Activated naive CD4-positive, alpha-beta T cell treated with anti-CD3 and anti-CD28 coated beads for 36 hours (primary cell): ENCODE measurements at regions of chr18 and their contacts with region 1.

Region 1: GRCh38 chr18:3281456-3282400 is 19.8 kb downstream of the MYL12B start:
- DNase-seq: no peak
- H3K4me3 Mint-ChIP-seq: no peak overlapping the region
- H3K27ac Mint-ChIP-seq: no peak overlapping the region
- H3K4me1 Mint-ChIP-seq: peaks cover 6% of the 10 kb centered on the region
- H3K27me3 Mint-ChIP-seq: no peaks in the 10 kb centered on the region

Region 2: GRCh38 chr18:3269241-3269913 is 12.4 kb before region 1 on chr18:
- CTCF ChIA-PET with region 1: interaction called, 4 read pairs
- intact Hi-C with region 1: loop called (anchors 1 kb)
- DNase-seq: no peak
- H3K4me3 Mint-ChIP-seq: no peak overlapping the region
- H3K27ac Mint-ChIP-seq: peak overlapping the region; percentile 28
- H3K4me1 Mint-ChIP-seq: peaks cover 74% of the 10 kb centered on the region
- H3K27me3 Mint-ChIP-seq: no peaks in the 10 kb centered on the region

Region 3: DNA sequence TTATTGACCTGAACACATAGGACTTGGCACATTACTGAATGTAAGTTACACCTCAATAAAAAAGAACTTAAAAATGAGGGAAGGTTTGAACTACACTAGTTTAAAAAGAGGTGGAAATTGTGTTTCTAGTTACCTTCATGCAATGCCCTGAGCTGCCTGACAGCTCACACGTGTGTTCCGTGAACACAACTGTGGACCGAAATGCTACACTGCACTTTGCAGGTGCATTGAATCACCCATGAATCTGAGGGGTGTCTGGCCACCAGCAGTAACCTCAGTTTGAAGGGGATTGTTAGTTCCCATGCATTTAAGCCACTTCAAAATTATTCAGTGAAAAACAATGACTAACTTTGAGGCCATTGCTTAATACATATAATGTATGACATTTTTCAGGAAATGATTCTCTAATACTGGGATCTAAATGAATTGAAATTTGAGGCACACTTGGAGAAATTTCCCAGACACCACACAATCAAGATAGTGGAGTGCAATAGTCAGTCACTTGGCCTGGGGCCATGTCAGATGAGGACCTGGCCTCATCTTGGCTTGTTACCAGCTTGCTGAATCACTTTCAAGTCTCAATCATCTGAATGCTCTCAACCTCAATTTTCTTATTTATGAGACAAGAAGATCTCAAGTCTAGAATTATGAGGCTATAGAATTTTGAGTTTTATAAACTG is 39.5 kb after region 1 on chr18:
- CTCF ChIA-PET with region 1: interaction called, 3 read pairs
- intact Hi-C with region 1: loop called (anchors 2 kb)
- DNase-seq: no peak
- H3K4me3 Mint-ChIP-seq: no peak overlapping the region
- H3K27ac Mint-ChIP-seq: no peak overlapping the region
- H3K4me1 Mint-ChIP-seq: peaks cover 7% of the 10 kb centered on the region
- H3K27me3 Mint-ChIP-seq: no peaks in the 10 kb centered on the region

Region 4: DNA sequence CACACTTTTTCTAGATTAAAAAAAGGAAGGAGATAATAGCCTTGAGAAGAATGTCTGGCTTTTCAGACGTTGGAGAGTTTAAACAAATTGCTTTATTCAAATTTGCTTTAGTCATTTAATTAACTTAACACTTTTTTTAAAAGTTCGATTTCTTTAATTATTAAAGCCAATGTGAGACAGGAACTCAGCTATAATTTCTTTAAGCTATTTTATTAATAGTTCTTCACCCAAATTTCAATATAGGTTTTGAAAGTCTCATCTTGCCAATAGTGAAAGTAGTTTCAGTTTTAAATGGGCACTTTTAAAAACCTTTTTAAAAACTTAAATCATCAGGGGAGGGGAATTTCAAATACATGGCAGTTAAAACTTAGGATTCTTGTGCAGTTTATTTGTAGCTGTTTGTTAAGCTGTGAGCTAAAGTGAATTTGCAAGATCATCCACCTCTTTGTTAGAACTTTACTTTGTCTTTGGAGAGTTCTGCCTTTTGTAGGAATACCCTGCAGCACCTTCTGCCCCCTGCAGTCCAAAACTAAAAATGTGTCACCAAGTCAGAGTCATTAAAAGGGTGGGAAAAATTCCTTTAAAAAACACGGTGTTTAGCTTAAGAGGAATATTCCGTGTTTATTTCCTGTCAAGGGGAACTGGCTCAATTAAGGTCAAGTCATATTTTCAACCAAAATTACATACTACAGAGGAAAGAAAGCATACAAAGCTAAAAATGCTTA is 172.8 kb after region 1 on chr18:
- CTCF ChIA-PET with region 1: interaction called, 5 read pairs
- intact Hi-C with region 1: loop called (anchors 1 kb)
- DNase-seq: peak; percentile 31
- H3K4me3 Mint-ChIP-seq: peak overlapping the region; percentile 89
- H3K27ac Mint-ChIP-seq: peak overlapping the region; percentile 99
- H3K4me1 Mint-ChIP-seq: peaks cover 63% of the 10 kb centered on the region
- H3K27me3 Mint-ChIP-seq: no peaks in the 10 kb centered on the region

Region 5: DNA sequence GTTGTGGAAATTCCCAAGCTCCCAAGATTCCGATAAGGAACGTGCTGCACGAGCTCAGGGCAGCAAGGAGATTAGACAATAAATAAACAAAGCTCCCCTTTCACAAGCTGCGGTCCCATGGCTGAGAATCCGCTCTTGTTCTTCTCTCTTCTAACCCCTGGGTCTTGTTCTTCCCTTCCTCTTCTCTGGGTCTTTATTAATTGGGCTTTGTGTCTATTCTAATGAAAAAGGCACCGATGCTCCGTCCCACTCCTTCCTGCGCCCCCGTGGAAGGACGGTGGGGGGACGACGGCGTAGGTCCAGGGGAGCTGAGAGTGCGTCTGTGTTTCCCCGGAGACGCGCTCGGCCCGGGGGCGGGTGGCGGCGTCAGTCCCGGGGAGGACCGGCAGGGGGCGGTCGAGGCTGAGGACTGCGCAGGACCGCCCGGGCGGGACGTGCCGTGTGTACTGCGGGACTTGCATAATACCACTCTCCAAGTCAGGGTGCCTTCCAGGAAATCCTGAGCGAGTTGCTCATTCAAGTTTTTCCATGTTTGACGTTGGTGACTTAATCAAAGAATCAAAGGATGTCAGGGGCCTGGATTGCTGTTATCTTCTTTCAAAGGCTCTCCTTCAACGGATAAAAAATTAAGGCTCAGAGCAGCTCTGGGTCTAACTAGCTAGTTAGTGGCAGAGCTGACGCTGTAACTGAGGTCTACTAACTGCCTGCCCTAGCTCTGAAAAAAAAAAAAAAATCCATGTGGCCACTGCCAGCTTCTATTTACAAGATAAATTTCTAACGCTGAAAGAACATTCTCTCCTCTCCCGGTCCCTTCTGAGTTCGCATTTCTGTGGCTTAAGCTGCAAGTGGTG is 489.6 kb after region 1 on chr18:
- CTCF ChIA-PET with region 1: interaction called, 5 read pairs
- intact Hi-C with region 1: loop called (anchors 5 kb)
- DNase-seq: peak; percentile 88
- H3K4me3 Mint-ChIP-seq: peak overlapping the region; percentile 55
- H3K27ac Mint-ChIP-seq: no peak overlapping the region
- H3K4me1 Mint-ChIP-seq: peaks cover 6% of the 10 kb centered on the region
- H3K27me3 Mint-ChIP-seq: peaks cover 28% of the 10 kb centered on the region

Region 6: GRCh38 chr18:3995476-3996102 is 713.9 kb after region 1 on chr18:
- CTCF ChIA-PET with region 1: no interaction called
- intact Hi-C with region 1: loop called (anchors 2 kb)
- DNase-seq: peak; percentile 78
- H3K4me3 Mint-ChIP-seq: no peak overlapping the region
- H3K27ac Mint-ChIP-seq: no peak overlapping the region
- H3K4me1 Mint-ChIP-seq: no peaks in the 10 kb centered on the region
- H3K27me3 Mint-ChIP-seq: peaks cover 5% of the 10 kb centered on the region